Caco-2 (cell line): ENCODE measurements at regions of chr5 and their contacts with region 1.

Region 1: DNA sequence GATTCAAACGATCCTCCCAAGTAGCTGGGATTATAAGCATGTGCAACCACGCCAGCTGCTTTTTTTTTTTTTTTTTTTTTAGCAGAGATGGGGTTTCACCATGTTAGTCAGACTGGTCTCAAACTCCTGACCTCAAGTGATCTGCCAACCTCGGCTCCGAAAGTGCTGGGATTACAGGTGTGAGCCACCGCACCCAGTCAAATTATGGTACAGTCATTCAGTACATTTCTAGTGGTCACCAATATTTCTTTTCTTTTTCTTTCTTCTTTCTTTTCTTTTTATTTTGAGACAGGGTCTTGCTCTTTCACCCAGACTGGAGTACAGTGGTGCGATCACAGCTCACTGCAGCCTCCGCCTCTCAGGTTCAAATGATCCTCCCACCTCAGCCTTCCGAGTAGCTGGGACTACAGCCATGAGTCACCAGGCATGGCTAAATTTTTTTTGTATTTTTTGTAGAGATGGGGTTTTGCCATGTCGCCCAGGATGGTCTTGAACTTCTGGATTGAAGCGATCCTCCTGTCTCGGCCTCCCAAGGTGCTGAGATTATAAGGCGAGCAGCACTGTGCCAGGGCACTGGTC is 25.4 kb upstream of the DCP2 start:
- DNase-seq: no peak
- H3K4me3 ChIP-seq: no peak overlapping the region
- H3K4me3 Mint-ChIP-seq: no peak overlapping the region
- H3K27ac Mint-ChIP-seq: no peak overlapping the region
- H3K4me1 ChIP-seq: no peaks in the 10 kb centered on the region
- H3K4me1 Mint-ChIP-seq: no peaks in the 10 kb centered on the region
- H3K27me3 ChIP-seq: no peaks in the 10 kb centered on the region
- H3K27me3 Mint-ChIP-seq: no peaks in the 10 kb centered on the region
- CTCF ChIP-seq: no peak

Region 2: DNA sequence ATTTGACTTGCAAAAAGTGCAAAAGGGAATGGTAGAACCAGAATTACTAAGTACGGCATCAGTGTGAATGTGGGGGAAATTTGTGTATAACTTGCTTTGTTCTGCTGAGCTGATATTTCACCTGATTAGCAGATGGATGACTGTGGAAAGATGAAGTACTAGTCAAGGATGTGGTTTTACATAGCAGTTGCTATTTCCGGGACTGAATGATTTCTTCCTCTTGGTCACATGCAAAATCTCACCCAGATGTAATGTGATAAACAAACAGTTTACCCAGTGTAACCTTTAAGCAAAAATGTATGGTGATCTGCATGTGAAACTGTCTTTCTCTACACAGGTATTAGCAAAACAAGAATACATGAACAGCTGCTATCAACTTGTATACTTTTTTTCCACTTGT is 71.4 kb after region 1 on chr5:
- CTCF ChIA-PET with region 1: interaction called, 13 read pairs
- POLR2A ChIA-PET with region 1: no interaction called
- intact Hi-C with region 1: no loop called
- DNase-seq: no peak
- H3K4me3 ChIP-seq: no peak overlapping the region
- H3K4me3 Mint-ChIP-seq: no peak overlapping the region
- H3K27ac Mint-ChIP-seq: no peak overlapping the region
- H3K4me1 ChIP-seq: no peaks in the 10 kb centered on the region; the same call in 1 of the 2 replicates
- H3K4me1 Mint-ChIP-seq: peaks cover 4% of the 10 kb centered on the region
- H3K27me3 ChIP-seq: no peaks in the 10 kb centered on the region
- H3K27me3 Mint-ChIP-seq: no peaks in the 10 kb centered on the region
- CTCF ChIP-seq: no peak